Naive thymus-derived CD4-positive, alpha-beta T cell (primary cell): ENCODE measurements at regions of chr10 and their contacts with region 1.

Region 1: DNA sequence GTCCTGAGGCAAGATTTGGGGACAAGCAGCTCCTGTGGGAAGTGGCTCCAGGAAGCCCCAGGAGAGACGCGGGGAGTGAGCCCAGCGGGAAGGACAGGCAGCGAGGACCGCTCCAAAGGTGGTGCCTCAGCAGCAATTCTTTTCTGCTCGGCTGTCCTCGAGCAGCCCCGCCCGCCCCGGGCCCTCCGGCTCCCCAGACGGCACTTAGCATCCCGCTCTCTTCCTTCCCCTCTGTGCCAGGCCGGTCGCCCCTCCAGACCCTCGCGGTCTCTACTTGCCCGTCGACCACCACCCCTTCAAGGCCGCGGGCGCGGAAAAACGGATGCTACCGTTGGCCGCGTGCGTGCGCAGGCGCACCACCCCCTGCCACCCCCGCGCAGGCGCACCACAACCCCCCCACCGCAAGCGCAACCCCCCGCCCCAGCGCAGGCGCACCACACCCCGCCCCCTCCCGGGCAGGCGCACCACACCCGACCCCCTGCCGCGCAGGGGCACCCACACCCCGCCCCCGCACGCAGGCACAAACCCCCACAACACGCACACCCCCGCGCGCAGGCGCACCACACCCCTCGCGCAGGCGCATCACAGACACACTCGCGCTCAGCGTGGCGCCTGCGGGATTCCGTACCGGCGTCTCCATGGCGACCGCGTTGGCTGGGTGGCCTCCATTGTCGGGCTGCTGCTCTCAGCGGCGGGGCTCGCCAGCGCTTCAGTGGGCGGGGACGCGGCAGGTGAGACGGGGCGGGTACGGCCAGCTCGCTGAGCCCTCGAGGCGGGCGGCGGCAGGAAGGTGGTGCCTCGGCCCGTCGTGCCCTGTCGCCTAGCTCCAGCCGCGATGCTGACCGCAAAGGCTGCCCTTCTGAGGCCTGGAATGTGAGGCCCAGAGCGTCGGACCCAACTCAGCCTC is at the start of gene LRRC27:
- DNase-seq: peak; percentile 99 to 100 (median 100)
- ATAC-seq: peak; percentile 93
- H3K4me3 ChIP-seq: peak within 1 kb of the TSS; percentile 96
- H3K4me3 Mint-ChIP-seq: peak within 1 kb of the TSS; percentile 86 to 96 (median 90)
- H3K27ac ChIP-seq: peak within 1 kb of the TSS; percentile 84
- H3K27ac Mint-ChIP-seq: peak within 1 kb of the TSS; percentile 86 to 97 (median 95)
- H3K4me1 ChIP-seq: peaks cover 11 to 24% of the 10 kb centered on the region in 2 donors
- H3K4me1 Mint-ChIP-seq: peaks cover 45 to 77% (median 66%) of the 10 kb centered on the region in 7 donors
- H3K27me3 ChIP-seq: no peaks in the 10 kb centered on the region
- H3K27me3 Mint-ChIP-seq: peaks cover 0 to 7% (median 0%) of the 10 kb centered on the region in 5 donors
- total RNA-seq, gene LRRC27: 3.4 to 10.8 (median 7.1) TPM

Region 2: DNA sequence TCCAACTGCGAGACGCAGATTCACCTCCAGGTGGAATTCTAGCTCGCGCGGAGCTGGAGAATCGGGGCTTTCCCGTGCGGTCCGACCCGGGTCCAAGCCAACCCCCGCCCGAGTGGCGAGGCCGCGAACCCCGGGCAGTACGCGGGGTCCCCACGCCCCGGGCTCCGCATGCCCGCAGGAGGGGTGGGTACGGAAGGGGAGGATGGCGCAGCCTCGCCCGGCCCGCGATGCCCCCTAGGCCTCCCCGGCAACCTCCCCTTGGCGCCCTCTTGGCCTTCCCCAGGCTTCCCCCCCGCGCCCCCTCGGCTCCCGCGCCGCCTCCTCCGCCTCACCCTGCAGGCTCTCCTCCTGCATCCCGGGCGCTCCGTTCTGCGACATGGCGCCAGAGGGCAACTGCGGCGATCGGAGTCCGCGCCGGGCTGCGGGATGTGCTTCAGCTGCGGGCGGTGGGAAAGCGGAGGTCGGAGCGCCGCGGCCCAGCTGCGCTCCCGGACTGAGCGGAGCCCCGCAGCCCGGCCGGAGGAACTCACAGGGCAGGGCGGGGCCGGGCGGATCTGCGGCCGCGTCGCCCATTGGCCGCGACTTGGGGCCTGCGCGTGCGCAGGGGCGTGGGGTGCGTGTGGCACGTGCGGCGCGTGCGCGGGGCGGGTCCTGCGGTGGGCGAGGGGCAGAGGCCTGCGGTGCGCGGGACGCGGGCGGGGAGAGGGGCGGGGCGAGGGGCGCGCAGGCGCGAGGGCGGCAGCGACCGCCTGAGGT is 350.2 kb before region 1 on chr10 and contains the start of gene BNIP3:
- CTCF ChIA-PET with region 1: no interaction called
- POLR2A ChIA-PET with region 1: no interaction called
- intact Hi-C with region 1: loop called in 1 of 2 experiments (anchors 2 kb)
- DNase-seq: peak; percentile 92 to 99 (median 93)
- ATAC-seq: peak; percentile 96
- H3K4me3 ChIP-seq: peak within 1 kb of the TSS; percentile 79
- H3K4me3 Mint-ChIP-seq: peak within 1 kb of the TSS; percentile 81 to 93 (median 88)
- H3K27ac ChIP-seq: peak within 1 kb of the TSS; percentile 79
- H3K27ac Mint-ChIP-seq: peak within 1 kb of the TSS; percentile 66 to 89 (median 84)
- H3K4me1 ChIP-seq: peaks cover 7 to 22% of the 10 kb centered on the region in 2 donors
- H3K4me1 Mint-ChIP-seq: peaks cover 23 to 49% (median 42%) of the 10 kb centered on the region in 7 donors
- H3K27me3 ChIP-seq: no peaks in the 10 kb centered on the region
- H3K27me3 Mint-ChIP-seq: peaks cover 0 to 18% (median 0%) of the 10 kb centered on the region in 5 donors
- total RNA-seq, gene BNIP3: 17.7 to 81.7 (median 39.3) TPM

Region 3: GRCh38 chr10:132185601-132186487 is 145.9 kb before region 1 on chr10:
- CTCF ChIA-PET with region 1: no interaction called
- POLR2A ChIA-PET with region 1: no interaction called
- intact Hi-C with region 1: loop called (anchors 1 kb)
- DNase-seq: peak; percentile 53 to 79 (median 66)
- ATAC-seq: peak; percentile 92
- H3K4me3 ChIP-seq: peak overlapping the region; percentile 27
- H3K4me3 Mint-ChIP-seq: peak overlapping the region; percentile 16 to 84 (median 63)
- H3K27ac ChIP-seq: peak overlapping the region; percentile 55
- H3K27ac Mint-ChIP-seq: peak overlapping the region in 3 of 9 donors; percentile 29 to 47 (median 41)
- H3K4me1 ChIP-seq: peaks cover 0 to 7% of the 10 kb centered on the region in 2 donors
- H3K4me1 Mint-ChIP-seq: peaks cover 3 to 28% (median 17%) of the 10 kb centered on the region in 7 donors
- H3K27me3 ChIP-seq: peaks cover 0 to 10% of the 10 kb centered on the region in 2 donors
- H3K27me3 Mint-ChIP-seq: peaks cover 0 to 38% (median 31%) of the 10 kb centered on the region in 5 donors

Region 4: DNA sequence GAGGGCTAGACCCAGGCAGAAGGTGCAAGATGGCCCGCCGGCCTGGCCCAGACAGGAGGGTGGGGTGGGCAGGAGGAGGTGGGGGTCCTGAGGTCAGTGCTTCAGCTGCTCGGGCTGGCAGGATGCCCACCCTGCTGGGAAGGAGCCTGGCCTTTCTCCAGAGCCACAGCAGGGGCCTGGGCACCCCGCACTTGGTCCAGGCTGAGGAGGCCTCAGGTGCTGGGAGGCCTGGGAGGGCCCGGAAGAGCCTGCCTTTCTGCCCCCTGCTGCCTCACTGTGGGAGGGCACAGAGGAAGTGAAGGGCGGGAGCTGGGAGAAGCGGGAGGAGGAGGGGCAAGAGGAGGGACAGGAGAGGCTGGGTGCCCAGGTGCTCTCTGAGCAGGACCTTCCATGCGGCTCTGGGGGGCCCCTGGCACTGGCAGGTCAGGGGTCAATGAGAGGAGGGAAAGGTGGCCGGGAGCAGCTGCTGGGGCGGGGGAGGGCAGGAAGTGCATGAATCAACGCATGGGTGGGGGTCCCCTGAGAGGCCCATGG is 114.9 kb after region 1 on chr10:
- CTCF ChIA-PET with region 1: no interaction called
- POLR2A ChIA-PET with region 1: no interaction called
- intact Hi-C with region 1: loop called in 1 of 2 experiments (anchors 1 kb)
- DNase-seq: peak in 8 of 9 donors; percentile 58 to 75 (median 70)
- ATAC-seq: peak; percentile 44
- H3K4me3 ChIP-seq: peak overlapping the region; percentile 60
- H3K4me3 Mint-ChIP-seq: peak overlapping the region; percentile 50 to 89 (median 78)
- H3K27ac ChIP-seq: peak overlapping the region; percentile 98
- H3K27ac Mint-ChIP-seq: peak overlapping the region; percentile 96 to 100 (median 98)
- H3K4me1 ChIP-seq: peaks cover 21 to 50% of the 10 kb centered on the region in 2 donors
- H3K4me1 Mint-ChIP-seq: peaks cover 25 to 64% (median 42%) of the 10 kb centered on the region in 7 donors
- H3K27me3 ChIP-seq: no peaks in the 10 kb centered on the region
- H3K27me3 Mint-ChIP-seq: no peaks in the 10 kb centered on the region

Region 5: DNA sequence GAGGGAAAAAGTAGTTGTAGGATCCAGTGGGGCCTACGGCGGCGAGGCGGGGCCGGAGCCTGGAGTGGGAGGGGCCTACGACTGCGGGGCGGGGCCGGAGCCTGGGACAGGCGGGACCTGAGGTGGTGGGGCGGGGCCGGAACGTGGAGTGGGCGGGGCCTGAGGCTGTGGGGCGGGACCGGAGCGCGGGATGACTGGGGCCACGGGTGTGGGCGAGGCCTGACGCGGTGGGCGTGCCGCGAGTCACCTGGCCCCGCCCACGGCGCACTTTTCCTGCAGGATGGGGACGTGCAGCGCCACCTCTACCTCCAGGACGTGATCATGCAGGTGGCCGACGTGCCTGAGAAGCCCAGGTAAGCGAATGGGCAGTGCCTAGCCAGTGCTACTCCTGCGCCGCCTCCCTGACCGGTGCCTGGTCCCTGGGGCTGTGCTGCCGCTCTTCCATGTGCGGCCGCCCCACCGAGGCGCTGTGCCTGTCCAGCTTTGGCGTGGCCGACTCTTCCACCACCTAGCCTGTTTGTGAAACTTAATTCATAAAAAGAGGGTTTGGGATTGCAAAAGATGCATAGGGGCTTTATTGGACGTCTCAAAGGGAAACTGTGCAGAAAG is 977.4 kb after region 1 on chr10:
- CTCF ChIA-PET with region 1: no interaction called
- POLR2A ChIA-PET with region 1: no interaction called
- intact Hi-C with region 1: loop called in 1 of 2 experiments (anchors 5 kb)
- DNase-seq: peak; percentile 92 to 99 (median 95)
- ATAC-seq: peak; percentile 90
- H3K4me3 ChIP-seq: peak overlapping the region; percentile 66
- H3K4me3 Mint-ChIP-seq: peak overlapping the region; percentile 53 to 97 (median 77)
- H3K27ac ChIP-seq: peak overlapping the region; percentile 100
- H3K27ac Mint-ChIP-seq: peak overlapping the region in 8 of 9 donors; percentile 72 to 98 (median 88)
- H3K4me1 ChIP-seq: peaks cover 8 to 10% of the 10 kb centered on the region in 2 donors
- H3K4me1 Mint-ChIP-seq: peaks cover 12 to 39% (median 30%) of the 10 kb centered on the region in 7 donors
- H3K27me3 ChIP-seq: no peaks in the 10 kb centered on the region
- H3K27me3 Mint-ChIP-seq: peaks cover 0 to 5% (median 0%) of the 10 kb centered on the region in 5 donors